Panc1 (cell line): ENCODE measurements at regions of chr1 and their contacts with region 1.

Region 1: GRCh38 chr1:157992031-157992832 is 1.2 kb upstream of the KIRREL1 start:
- DNase-seq: no peak
- ATAC-seq: peak; percentile 63
- H3K4me3 ChIP-seq: peak overlapping the region; percentile 89 to 95
- H3K27ac ChIP-seq: peak overlapping the region; percentile 93
- H3K4me1 ChIP-seq: peaks cover 33% of the 10 kb centered on the region
- H3K27me3 ChIP-seq: no peaks in the 10 kb centered on the region
- CTCF ChIP-seq: peak; percentile 99

Region 2: GRCh38 chr1:158035976-158036583 is 43.8 kb after region 1 on chr1:
- CTCF ChIA-PET with region 1: interaction called, 17 read pairs
- POLR2A ChIA-PET with region 1: interaction called, 13 read pairs
- in situ Hi-C with region 1: no loop called
- intact Hi-C with region 1: loop called (anchors 1 kb)
- DNase-seq: no peak
- ATAC-seq: peak; percentile 59
- H3K4me3 ChIP-seq: no peak overlapping the region
- H3K27ac ChIP-seq: peak overlapping the region; percentile 64
- H3K4me1 ChIP-seq: peaks cover 48% of the 10 kb centered on the region
- H3K27me3 ChIP-seq: no peaks in the 10 kb centered on the region
- CTCF ChIP-seq: peak; percentile 84

Region 3: GRCh38 chr1:158067662-158068061 is 75.4 kb after region 1 on chr1:
- CTCF ChIA-PET with region 1: no interaction called
- POLR2A ChIA-PET with region 1: no interaction called
- in situ Hi-C with region 1: no loop called
- intact Hi-C with region 1: no loop called
- DNase-seq: no peak
- ATAC-seq: no peak
- H3K4me3 ChIP-seq: no peak overlapping the region
- H3K27ac ChIP-seq: no peak overlapping the region
- H3K4me1 ChIP-seq: peaks cover 2% of the 10 kb centered on the region
- H3K27me3 ChIP-seq: no peaks in the 10 kb centered on the region
- CTCF ChIP-seq: no peak

Region 4: GRCh38 chr1:158087320-158087927 is 95.2 kb after region 1 on chr1:
- CTCF ChIA-PET with region 1: interaction called, 16 read pairs
- POLR2A ChIA-PET with region 1: no interaction called
- in situ Hi-C with region 1: no loop called
- intact Hi-C with region 1: loop called (anchors 1 kb)
- DNase-seq: peak; percentile 39
- ATAC-seq: peak; percentile 75
- H3K4me3 ChIP-seq: no peak overlapping the region
- H3K27ac ChIP-seq: no peak overlapping the region
- H3K4me1 ChIP-seq: no peaks in the 10 kb centered on the region
- H3K27me3 ChIP-seq: no peaks in the 10 kb centered on the region
- CTCF ChIP-seq: peak; percentile 96

Region 5: DNA sequence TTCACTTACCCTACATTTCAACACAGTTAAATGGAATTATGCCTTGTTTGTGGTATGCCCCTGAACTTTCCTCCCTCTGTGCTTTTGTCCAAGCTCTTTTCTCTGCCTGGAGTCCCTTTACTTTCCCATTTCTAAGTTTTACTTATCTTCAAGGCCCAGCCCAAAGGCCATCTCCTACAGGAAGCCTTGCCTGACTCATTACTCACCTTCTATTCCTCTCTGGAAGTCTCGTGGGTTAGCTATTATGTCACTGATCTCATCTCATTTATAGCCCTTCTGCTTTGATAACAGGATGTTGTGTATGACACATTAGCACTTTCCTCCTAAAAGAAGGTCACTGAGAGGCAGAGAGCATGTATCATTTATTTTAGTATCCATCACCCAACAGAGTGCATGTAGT is 109.7 kb after region 1 on chr1:
- CTCF ChIA-PET with region 1: no interaction called
- POLR2A ChIA-PET with region 1: no interaction called
- in situ Hi-C with region 1: no loop called
- intact Hi-C with region 1: loop called (anchors 5 kb)
- DNase-seq: no peak
- ATAC-seq: peak; percentile 19
- H3K4me3 ChIP-seq: no peak overlapping the region
- H3K27ac ChIP-seq: no peak overlapping the region
- H3K4me1 ChIP-seq: no peaks in the 10 kb centered on the region
- H3K27me3 ChIP-seq: no peaks in the 10 kb centered on the region
- CTCF ChIP-seq: no peak

Region 6: DNA sequence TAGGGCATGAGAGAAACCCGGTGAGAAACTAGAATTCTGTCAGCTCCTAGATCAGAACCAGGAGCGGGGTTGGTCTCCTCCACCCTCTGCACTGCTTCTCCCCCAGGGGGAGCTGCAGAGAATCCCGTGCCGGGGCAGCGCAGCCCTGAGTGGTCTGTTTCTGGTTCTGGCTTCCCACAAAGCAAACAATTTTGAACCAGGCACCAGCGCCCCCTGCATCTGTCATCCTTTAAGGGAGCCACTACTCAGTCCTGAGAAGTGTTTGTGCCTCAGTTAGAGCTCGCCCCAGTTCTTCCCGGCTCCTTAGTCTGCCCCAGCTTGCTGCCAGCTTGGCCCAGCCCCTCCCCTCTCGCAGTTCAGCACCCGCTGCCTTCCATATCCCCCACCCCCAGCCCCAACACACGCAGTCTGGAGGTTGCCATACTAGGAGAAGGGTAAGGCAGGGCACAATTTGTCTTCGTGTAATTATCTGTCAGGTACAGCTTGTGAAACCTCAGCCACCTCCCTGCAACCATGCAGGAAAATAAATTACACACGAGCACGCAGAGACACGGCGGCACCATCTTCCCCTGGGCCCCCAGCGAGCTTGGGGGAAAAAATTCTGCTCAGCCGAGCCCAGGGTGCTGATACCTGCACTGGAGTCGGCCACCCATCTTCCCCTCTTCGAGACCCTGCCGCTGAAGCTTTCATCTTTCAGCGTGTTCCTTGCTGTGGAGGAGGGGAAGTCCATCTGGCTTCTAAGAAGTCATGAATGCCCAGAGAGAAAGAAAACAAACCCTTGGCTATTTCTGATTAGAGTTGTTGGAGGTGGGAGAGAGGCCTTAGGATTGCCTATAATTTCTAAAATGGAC is 125.8 kb after region 1 on chr1:
- CTCF ChIA-PET with region 1: interaction called, 40 read pairs
- POLR2A ChIA-PET with region 1: no interaction called
- in situ Hi-C with region 1: no loop called
- intact Hi-C with region 1: no loop called
- DNase-seq: no peak
- ATAC-seq: peak; percentile 93
- H3K4me3 ChIP-seq: peak overlapping the region; percentile 12 to 40
- H3K27ac ChIP-seq: no peak overlapping the region
- H3K4me1 ChIP-seq: peaks cover 6% of the 10 kb centered on the region; the same call in 1 of the 2 replicates
- H3K27me3 ChIP-seq: peaks cover 4% of the 10 kb centered on the region; the same call in 1 of the 2 replicates
- CTCF ChIP-seq: peak; percentile 85